Activated CD4-positive, alpha-beta T cell treated with anti-CD3 and anti-CD28 coated beads for 36 hours (primary cell): ENCODE measurements at regions of chr11 and their contacts with region 1.

Region 1: GRCh38 chr11:45665206-45665932 is at the start of gene CHST1:
- DNase-seq: peak; percentile 56
- ATAC-seq: peak; percentile 43
- H3K4me3 Mint-ChIP-seq: peak within 1 kb of the TSS; percentile 47
- H3K27ac Mint-ChIP-seq: no peak within 1 kb of the TSS
- H3K4me1 Mint-ChIP-seq: peaks cover 5% of the 10 kb centered on the region
- H3K27me3 Mint-ChIP-seq: peaks cover 48% of the 10 kb centered on the region
- total RNA-seq, gene CHST1: 0.11 to 0.12 TPM

Region 2: GRCh38 chr11:45655347-45655756 is 10.0 kb before region 1 on chr11:
- CTCF ChIA-PET with region 1: interaction called, 11 read pairs
- POLR2A ChIA-PET with region 1: no interaction called
- intact Hi-C with region 1: no loop called
- DNase-seq: peak; percentile 81
- ATAC-seq: peak; percentile 83
- H3K4me3 Mint-ChIP-seq: no peak overlapping the region
- H3K27ac Mint-ChIP-seq: no peak overlapping the region
- H3K4me1 Mint-ChIP-seq: peaks cover 3% of the 10 kb centered on the region
- H3K27me3 Mint-ChIP-seq: peaks cover 15% of the 10 kb centered on the region

Region 3: GRCh38 chr11:45725776-45726492 is 60.6 kb after region 1 on chr11:
- CTCF ChIA-PET with region 1: no interaction called
- POLR2A ChIA-PET with region 1: no interaction called
- intact Hi-C with region 1: loop called in 1 of 2 experiments (anchors 5 kb)
- DNase-seq: peak; percentile 11
- ATAC-seq: peak; percentile 68
- H3K4me3 Mint-ChIP-seq: no peak overlapping the region
- H3K27ac Mint-ChIP-seq: peak overlapping the region; percentile 62
- H3K4me1 Mint-ChIP-seq: peaks cover 12% of the 10 kb centered on the region
- H3K27me3 Mint-ChIP-seq: peaks cover 1% of the 10 kb centered on the region

Region 4: DNA sequence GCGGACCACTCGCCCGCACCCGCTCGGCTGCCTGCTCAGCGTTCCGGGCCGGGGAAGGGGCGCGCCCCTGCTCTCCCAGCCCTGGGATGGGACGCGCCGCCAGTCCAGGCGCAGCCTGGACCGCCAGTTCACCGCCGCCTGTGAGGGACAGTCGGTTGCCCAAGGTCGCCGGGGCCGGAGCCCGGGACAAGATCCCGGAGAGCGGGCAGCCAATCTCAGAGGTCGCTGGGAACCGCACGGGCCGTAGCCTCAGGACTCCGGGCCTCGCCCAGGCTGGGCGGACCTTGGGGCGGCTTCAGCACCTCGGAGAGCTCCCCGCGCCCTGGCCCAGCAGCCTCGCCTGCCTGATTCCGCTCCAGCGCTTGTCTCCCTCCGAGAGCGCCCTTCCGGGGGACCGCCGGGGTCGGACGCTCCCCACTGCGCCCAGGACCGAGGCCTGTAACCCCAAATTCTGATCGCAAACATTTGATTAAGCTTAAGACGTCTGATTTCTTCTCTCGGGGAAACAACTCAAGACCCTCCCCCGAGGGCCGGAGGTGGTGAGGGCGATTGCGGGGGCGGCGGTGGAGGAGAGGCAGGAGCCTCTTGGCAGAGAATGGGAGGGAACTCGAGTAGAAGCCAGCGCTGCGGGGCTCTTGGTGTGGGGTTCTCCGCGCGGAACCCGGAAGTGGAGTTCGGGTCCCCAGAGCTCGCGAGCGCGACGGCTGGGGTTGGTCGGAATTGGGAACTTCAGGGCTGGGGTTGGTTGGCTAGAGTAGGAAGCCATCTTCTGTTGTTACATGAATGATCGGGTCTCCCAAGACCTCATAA is 727.3 kb after region 1 on chr11:
- CTCF ChIA-PET with region 1: no interaction called
- POLR2A ChIA-PET with region 1: no interaction called
- intact Hi-C with region 1: no loop called
- DNase-seq: peak; percentile 89
- ATAC-seq: peak; percentile 76
- H3K4me3 Mint-ChIP-seq: peak overlapping the region; percentile 61
- H3K27ac Mint-ChIP-seq: no peak overlapping the region
- H3K4me1 Mint-ChIP-seq: peaks cover 22% of the 10 kb centered on the region
- H3K27me3 Mint-ChIP-seq: peaks cover 37% of the 10 kb centered on the region